SK-N-SH (cell line): ENCODE measurements at regions of chr16 and their contacts with region 1.

Region 1: DNA sequence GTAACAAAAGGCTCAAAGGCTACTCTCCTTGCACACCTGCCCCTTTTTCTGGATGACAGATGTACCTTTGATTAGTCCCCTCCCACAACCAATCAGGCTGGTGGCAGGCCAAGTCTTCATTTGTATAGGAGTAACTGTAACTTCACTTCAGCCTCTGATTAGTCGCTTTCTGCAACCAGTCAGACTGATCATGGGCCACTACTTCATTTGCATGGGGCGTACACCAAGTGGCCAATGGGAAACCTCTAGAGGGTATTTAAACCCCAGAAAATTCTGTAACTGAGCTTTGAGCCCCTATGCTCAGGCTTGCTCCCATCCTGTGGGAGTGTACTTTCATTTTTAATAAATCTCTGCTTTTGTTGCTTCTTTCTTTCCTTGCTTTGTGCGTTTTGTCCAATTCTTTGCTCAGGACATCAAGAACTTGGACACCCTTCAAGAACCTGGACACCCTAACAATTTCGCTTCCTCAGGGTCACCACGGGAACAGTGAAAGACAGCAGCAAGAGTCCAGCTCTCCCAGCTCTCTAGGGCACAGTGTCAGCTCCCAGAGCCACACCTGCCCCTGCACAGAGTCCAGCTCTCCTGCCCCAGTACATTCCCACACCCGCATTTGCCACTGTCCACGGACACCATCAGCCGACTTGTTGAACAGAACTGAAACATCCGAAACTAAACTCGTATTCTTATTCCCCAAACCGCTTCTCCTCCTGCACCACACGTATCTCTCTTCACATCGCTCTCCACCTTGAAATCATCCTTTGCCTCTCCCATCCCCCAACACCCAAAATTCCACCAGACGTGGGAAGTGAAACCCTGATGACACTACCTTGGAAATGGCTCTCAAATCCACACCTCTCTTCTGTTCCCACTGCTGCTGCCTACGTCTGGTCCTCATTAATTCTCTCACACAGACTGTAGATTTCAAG is 53.4 kb downstream of the ABCC12 start:
- DNase-seq: no peak
- H3K4me3 ChIP-seq: no peak overlapping the region
- H3K27ac ChIP-seq: no peak overlapping the region
- H3K4me1 ChIP-seq: no peaks in the 10 kb centered on the region
- H3K27me3 ChIP-seq: no peaks in the 10 kb centered on the region
- CTCF ChIP-seq: no peak
- EP300 ChIP-seq: no peak
- RAD21 ChIP-seq: no peak

Region 2: DNA sequence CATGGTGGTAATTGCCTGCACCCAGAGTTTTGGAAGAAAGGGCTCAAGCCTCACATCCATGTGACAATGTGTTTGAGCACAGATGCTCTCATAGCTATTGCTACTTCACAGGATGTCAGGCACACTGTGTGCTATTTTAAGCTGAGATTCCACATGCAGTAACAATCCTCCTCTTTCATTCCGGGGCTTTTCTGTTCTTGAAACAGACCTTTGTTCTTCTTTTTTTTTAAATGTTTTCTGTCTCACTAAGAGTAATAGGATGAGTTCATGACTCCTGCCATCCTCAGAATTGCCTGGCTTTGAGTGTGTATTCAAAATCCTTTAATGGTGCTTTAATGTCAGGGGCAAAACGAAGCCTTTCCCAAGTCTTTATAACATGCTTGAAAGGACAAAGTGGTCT is 145.4 kb before region 1 on chr16:
- CTCF ChIA-PET with region 1: no interaction called
- POLR2A ChIA-PET with region 1: no interaction called
- DNase-seq: no peak
- H3K4me3 ChIP-seq: no peak overlapping the region
- H3K27ac ChIP-seq: no peak overlapping the region
- H3K4me1 ChIP-seq: no peaks in the 10 kb centered on the region
- H3K27me3 ChIP-seq: no peaks in the 10 kb centered on the region
- CTCF ChIP-seq: no peak
- EP300 ChIP-seq: no peak
- RAD21 ChIP-seq: no peak

Region 3: DNA sequence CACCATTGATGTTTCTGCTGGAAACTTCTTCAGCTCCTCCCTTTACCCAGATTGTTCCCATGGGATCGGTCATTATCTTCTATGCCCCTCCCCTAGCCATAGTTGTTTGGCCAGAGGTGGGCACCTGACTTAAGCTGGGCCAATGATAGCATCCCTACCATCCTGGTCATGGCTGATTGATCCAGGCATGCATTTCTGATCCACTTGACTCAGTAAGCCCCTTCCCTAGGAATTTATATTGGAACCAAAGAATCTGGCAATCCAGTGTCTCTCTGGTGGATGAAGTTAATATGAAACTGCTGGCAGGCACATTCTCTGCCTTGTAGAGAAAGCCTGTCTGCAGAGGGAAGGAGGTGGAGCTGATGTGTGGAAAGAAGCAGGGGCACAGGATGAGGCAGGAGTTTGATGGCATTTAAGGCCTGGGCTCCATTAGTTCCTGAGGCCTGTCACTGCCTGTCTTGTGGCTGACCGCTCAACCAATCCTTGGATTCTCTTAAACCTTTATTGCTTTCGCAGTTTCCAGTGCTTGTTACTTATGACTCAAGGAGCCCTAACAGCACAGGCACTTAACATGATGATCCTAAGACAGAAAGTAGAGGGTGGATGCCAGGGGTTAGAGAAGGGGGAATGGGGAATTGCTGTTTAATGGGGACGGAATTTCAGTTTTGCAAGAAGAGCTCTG is 99.0 kb before region 1 on chr16:
- CTCF ChIA-PET with region 1: no interaction called
- POLR2A ChIA-PET with region 1: no interaction called
- DNase-seq: no peak
- H3K4me3 ChIP-seq: no peak overlapping the region
- H3K27ac ChIP-seq: no peak overlapping the region
- H3K4me1 ChIP-seq: no peaks in the 10 kb centered on the region
- H3K27me3 ChIP-seq: no peaks in the 10 kb centered on the region
- CTCF ChIP-seq: no peak
- EP300 ChIP-seq: no peak
- RAD21 ChIP-seq: no peak

Region 4: GRCh38 chr16:48117217-48118105 is 15.1 kb after region 1 on chr16:
- CTCF ChIA-PET with region 1: interaction called, 23 read pairs
- POLR2A ChIA-PET with region 1: no interaction called
- DNase-seq: peak; percentile 92
- H3K4me3 ChIP-seq: peak overlapping the region in 1 of 2 experiments; percentile 36; a peak in 1 of 4 replicates
- H3K27ac ChIP-seq: no peak overlapping the region
- H3K4me1 ChIP-seq: peaks cover 9 to 19% of the 10 kb centered on the region in 2 experiments; a peak in 2 of 4 replicates
- H3K27me3 ChIP-seq: no peaks in the 10 kb centered on the region
- CTCF ChIP-seq: peak; percentile 88
- EP300 ChIP-seq: no peak
- RAD21 ChIP-seq: peak; percentile 73

Region 5: DNA sequence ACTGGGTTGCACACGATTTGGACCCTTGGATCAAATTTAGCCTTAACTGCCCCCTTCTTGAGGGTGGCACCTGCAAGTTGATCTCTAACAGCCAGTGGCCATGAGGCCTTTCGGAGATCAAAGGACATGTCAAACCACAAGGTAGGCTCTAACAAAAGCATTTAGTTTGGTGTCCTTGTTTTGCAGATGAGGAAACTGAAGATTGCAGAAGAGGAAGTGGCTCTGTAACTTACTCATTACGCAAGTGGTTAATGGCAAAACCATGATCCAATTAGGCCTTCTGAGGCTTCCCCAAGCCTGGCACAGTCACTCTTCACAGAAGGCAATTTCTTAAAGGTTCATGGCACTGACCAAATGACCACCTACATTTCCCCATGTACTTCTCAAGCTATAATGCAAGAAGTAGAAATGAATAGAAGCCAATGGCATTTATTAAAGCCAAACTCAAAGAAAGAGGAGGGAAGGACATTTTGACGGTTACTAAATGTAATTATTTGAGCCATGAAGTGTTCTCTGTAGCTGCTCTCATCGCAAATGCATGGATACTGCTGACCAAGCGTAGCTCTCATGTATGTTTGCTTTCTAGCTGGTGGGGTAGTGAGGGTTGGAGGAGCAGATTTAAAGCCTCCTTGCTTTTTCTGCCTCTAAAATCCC is 86.2 kb after region 1 on chr16:
- CTCF ChIA-PET with region 1: no interaction called
- POLR2A ChIA-PET with region 1: no interaction called
- DNase-seq: no peak
- H3K4me3 ChIP-seq: no peak overlapping the region
- H3K27ac ChIP-seq: no peak overlapping the region
- H3K4me1 ChIP-seq: no peaks in the 10 kb centered on the region
- H3K27me3 ChIP-seq: no peaks in the 10 kb centered on the region
- CTCF ChIP-seq: no peak
- EP300 ChIP-seq: no peak
- RAD21 ChIP-seq: no peak